Common myeloid progenitor, CD34-positive (primary cell): ENCODE measurements at regions of chr10 and their contacts with region 1.

Region 1: GRCh38 chr10:30719832-30720618 is 90.5 kb upstream of the LYZL2 start:
- DNase-seq: no peak
- H3K4me3 ChIP-seq: no peak overlapping the region
- H3K27ac ChIP-seq: no peak overlapping the region
- H3K4me1 ChIP-seq: peaks cover 0 to 8% (median 1%) of the 10 kb centered on the region in 4 experiments
- H3K27me3 ChIP-seq: no peaks in the 10 kb centered on the region

Region 2: DNA sequence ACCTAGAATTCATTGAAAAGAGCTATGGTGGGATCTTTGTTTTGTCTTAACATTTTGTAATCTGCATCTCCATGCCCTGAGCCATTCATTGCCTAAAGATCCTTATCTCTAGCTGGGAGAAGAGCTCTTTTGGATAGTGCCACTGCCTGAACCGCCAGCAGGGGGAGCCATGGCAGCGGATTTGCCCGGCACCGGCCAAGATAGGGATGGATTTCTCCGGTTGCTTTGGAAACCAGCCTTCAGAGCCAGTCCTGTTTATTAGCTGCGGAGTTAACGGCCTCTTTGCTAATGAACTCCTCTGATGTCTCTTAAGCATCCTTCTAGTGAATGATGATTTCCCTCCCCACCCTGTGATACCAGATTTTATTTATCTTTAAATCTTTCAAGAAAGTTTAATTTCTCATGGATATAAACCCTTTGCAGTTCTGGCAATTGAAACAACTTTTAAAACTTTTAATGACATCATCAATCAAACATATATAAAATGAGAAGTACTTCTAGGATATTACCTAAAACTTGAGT is 32.3 kb before region 1 on chr10:
- CTCF ChIA-PET with region 1: interaction called, 20 read pairs
- POLR2A ChIA-PET with region 1: no interaction called
- DNase-seq: peak; percentile 65 to 71 (median 69)
- H3K4me3 ChIP-seq: no peak overlapping the region
- H3K27ac ChIP-seq: no peak overlapping the region
- H3K4me1 ChIP-seq: peaks cover 0 to 10% (median 7%) of the 10 kb centered on the region in 4 experiments
- H3K27me3 ChIP-seq: peaks cover 3 to 18% (median 11%) of the 10 kb centered on the region in 5 experiments